ENCODE measurements at regions of chr19 and their contacts with region 1.

Region 1: DNA sequence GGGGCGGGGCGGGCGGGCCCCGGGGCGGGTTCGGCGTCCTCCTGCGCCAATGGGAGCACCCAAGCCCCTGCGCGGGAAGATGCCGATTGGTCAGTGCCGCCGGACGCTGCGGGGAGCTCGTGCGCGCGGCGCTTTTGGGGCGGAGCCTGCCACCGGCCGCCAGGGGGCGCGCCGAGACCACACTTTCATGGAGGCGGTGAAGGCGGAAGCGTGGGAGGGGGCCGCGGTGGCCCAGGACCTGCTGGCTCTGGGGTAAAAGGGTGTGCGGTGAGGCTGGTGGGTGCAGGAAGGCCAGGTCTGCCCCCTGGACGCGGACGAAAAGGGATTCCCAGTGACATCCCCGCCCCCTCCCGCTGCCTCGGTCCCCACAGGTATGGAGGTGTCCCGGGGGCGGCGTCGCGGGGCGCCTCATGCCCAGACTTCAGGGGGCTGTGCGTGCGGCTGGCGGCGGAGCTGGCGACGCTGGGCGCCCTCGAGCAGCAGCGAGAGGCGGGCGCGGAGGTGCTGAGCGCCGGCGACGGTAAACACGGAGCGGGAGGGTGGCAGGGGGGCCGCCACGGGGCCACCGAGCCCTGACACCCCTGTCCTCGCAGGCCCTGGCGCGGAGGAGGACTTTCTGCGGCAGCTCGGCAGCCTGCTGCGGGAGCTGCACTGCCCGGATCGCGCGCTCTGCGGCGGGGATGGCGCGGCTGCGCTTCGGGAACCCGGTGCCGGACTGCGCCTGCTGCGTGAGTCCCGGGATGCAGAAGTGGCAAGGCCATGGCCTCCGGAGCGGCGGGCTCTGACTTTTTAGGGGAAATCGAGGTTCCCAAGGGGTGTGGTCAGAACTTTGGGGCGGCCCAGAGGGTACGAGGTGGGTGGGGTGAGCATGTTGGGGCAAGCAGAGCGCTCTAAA is at the start of gene FAM98C:
- DNase-seq: peak; percentile 96 to 99 (median 98)
- H3K4me3 ChIP-seq: peak within 1 kb of the TSS; percentile 83
- H3K4me3 Mint-ChIP-seq: peak within 1 kb of the TSS; percentile 89 to 98 (median 92)
- H3K27ac ChIP-seq: peak within 1 kb of the TSS; percentile 67
- H3K27ac Mint-ChIP-seq: peak within 1 kb of the TSS; percentile 80 to 96 (median 93)
- H3K4me1 ChIP-seq: peaks cover 10% of the 10 kb centered on the region
- H3K4me1 Mint-ChIP-seq: peaks cover 13 to 27% (median 20%) of the 10 kb centered on the region in 3 donors
- H3K27me3 ChIP-seq: no peaks in the 10 kb centered on the region
- H3K27me3 Mint-ChIP-seq: peaks cover 0 to 8% of the 10 kb centered on the region in 2 donors
- total RNA-seq, gene FAM98C: 17.8 to 25.2 TPM

Region 2: DNA sequence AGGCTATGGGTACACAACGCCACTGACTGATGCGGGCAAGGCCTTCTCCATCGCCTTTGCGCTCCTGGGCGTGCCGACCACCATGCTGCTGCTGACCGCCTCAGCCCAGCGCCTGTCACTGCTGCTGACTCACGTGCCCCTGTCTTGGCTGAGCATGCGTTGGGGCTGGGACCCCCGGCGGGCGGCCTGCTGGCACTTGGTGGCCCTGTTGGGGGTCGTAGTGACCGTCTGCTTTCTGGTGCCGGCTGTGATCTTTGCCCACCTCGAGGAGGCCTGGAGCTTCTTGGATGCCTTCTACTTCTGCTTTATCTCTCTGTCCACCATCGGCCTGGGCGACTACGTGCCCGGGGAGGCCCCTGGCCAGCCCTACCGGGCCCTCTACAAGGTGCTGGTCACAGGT is 76.6 kb before region 1 on chr19:
- CTCF ChIA-PET with region 1: no interaction called
- POLR2A ChIA-PET with region 1: no interaction called
- DNase-seq: no peak
- H3K4me3 ChIP-seq: no peak overlapping the region
- H3K4me3 Mint-ChIP-seq: no peak overlapping the region
- H3K27ac ChIP-seq: no peak overlapping the region
- H3K27ac Mint-ChIP-seq: no peak overlapping the region
- H3K4me1 ChIP-seq: no peaks in the 10 kb centered on the region
- H3K4me1 Mint-ChIP-seq: peaks cover 3 to 11% (median 8%) of the 10 kb centered on the region in 3 donors
- H3K27me3 ChIP-seq: no peaks in the 10 kb centered on the region
- H3K27me3 Mint-ChIP-seq: no peaks in the 10 kb centered on the region

Region 3: GRCh38 chr19:38387550-38388348 is 15.5 kb before region 1 on chr19 and contains the start of gene GGN:
- CTCF ChIA-PET with region 1: interaction called, 16 read pairs
- POLR2A ChIA-PET with region 1: interaction called, 19 read pairs
- DNase-seq: peak; percentile 68 to 83 (median 71)
- H3K4me3 ChIP-seq: peak within 1 kb of the TSS; percentile 78
- H3K4me3 Mint-ChIP-seq: peak within 1 kb of the TSS; percentile 82 to 95 (median 91)
- H3K27ac ChIP-seq: peak within 1 kb of the TSS; percentile 31
- H3K27ac Mint-ChIP-seq: peak within 1 kb of the TSS; percentile 61 to 97 (median 88)
- H3K4me1 ChIP-seq: peaks cover 24% of the 10 kb centered on the region
- H3K4me1 Mint-ChIP-seq: peaks cover 17 to 28% (median 19%) of the 10 kb centered on the region in 3 donors
- H3K27me3 ChIP-seq: no peaks in the 10 kb centered on the region
- H3K27me3 Mint-ChIP-seq: peaks cover 4 to 9% of the 10 kb centered on the region in 2 donors
- total RNA-seq, gene GGN: 0.15 TPM in 1 of 2 experiments, not detected in the other

Region 4: GRCh38 chr19:38514812-38515633 is 111.8 kb after region 1 on chr19:
- CTCF ChIA-PET with region 1: interaction called, 22 read pairs
- POLR2A ChIA-PET with region 1: no interaction called
- DNase-seq: peak; percentile 61 to 83 (median 68)
- H3K4me3 ChIP-seq: no peak overlapping the region
- H3K4me3 Mint-ChIP-seq: peak overlapping the region in 2 of 7 donors; percentile 15 to 29
- H3K27ac ChIP-seq: no peak overlapping the region
- H3K27ac Mint-ChIP-seq: peak overlapping the region in 4 of 8 donors; percentile 0 to 25 (median 16)
- H3K4me1 ChIP-seq: peaks cover 5% of the 10 kb centered on the region
- H3K4me1 Mint-ChIP-seq: peaks cover 8 to 20% (median 18%) of the 10 kb centered on the region in 3 donors
- H3K27me3 ChIP-seq: no peaks in the 10 kb centered on the region
- H3K27me3 Mint-ChIP-seq: peaks cover 0 to 3% of the 10 kb centered on the region in 2 donors

Region 5: DNA sequence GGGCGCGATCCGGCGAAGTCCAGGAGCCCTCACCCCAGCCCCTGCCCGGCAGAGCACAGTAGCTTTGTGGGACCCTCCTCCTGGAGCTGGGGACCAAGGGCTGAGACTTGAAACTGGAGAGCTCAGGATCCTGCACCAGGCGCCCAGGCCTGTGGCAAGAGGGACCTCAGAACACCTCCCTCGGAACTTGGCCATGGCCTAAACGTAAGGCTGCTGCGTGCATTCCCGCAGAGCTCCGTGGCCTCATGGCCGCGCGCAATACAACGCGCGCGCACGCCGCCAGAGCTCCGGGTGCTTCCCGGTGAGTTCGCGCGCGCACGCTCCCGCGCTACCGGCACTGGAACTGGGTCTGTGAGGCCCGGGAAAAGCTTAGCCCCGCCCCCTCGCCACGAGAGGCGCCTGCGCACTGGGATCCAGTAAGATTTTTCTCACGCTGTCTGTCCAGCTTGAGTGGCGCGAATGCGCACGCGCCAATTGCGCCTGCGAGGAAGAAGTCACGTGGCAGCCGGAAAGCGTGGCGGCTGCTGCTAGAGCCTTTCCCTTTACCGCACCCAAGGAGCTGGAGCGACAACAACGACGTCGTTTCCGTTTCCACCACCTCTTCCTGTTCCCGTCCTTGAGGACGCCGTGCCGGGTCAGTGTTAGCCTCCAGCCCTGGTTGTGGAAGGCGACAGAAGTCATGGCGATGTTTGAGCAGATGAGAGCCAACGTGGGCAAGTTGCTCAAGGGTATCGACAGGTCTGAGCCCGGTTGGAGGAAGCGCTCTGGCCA is 215.6 kb after region 1 on chr19 and contains the start of gene EIF3K:
- CTCF ChIA-PET with region 1: interaction called, 15 read pairs
- POLR2A ChIA-PET with region 1: interaction called, 10 read pairs
- DNase-seq: peak; percentile 96 to 98 (median 96)
- H3K4me3 ChIP-seq: peak within 1 kb of the TSS; percentile 75
- H3K4me3 Mint-ChIP-seq: peak within 1 kb of the TSS; percentile 96 to 100 (median 99)
- H3K27ac ChIP-seq: peak within 1 kb of the TSS; percentile 85
- H3K27ac Mint-ChIP-seq: peak within 1 kb of the TSS; percentile 92 to 100 (median 99)
- H3K4me1 ChIP-seq: peaks cover 46% of the 10 kb centered on the region
- H3K4me1 Mint-ChIP-seq: peaks cover 47 to 63% (median 63%) of the 10 kb centered on the region in 3 donors
- H3K27me3 ChIP-seq: no peaks in the 10 kb centered on the region
- H3K27me3 Mint-ChIP-seq: no peaks in the 10 kb centered on the region
- total RNA-seq, gene EIF3K: 275 to 282 TPM

Region 6: DNA sequence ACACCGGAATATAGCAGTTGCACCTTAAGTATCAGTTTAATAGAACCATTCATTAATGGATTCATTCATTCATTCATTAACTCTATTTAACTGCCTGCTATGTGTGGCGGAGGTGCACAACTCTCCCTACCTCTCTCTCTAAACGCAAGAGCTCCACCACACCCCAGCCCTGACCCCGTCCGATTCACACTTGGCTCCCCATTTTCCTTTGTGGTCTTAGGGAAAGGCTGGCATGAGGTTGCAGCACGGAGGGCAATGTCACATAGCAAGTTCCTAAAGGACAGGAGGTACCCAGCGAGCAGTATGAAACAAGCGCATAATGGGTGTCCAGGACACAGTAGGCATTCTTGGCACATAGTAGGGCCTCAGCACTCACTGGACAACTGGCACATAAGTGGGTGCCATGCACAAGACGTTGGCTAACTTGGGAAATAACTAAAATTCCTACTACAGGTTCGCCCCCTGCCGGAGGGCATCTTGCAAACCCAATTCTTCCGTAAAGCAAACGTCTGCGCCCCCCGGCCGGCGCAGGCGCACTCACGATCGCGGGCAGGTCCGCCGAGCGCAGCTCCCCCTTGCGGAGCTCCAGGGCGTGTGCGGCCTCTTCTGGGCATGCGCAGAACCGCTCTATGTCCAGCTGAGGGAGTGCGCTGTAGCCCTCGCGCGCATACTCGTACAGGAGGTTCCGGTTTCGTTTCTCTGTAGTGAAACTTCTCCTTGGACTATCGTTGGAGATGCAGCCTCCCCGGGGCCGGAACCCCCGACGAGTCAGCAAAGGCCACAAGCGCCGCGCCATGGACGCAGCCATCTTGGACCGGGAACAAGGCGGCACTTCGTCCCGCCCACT is 526.9 kb after region 1 on chr19 and contains the start of gene SARS2:
- CTCF ChIA-PET with region 1: interaction called, 51 read pairs
- POLR2A ChIA-PET with region 1: interaction called, 12 read pairs
- DNase-seq: peak; percentile 88 to 97 (median 96)
- H3K4me3 ChIP-seq: peak within 1 kb of the TSS; percentile 96
- H3K4me3 Mint-ChIP-seq: peak within 1 kb of the TSS; percentile 97 to 100 (median 98)
- H3K27ac ChIP-seq: peak within 1 kb of the TSS; percentile 95
- H3K27ac Mint-ChIP-seq: peak within 1 kb of the TSS; percentile 90 to 100 (median 99)
- H3K4me1 ChIP-seq: peaks cover 49% of the 10 kb centered on the region
- H3K4me1 Mint-ChIP-seq: peaks cover 45 to 62% (median 47%) of the 10 kb centered on the region in 3 donors
- H3K27me3 ChIP-seq: no peaks in the 10 kb centered on the region
- H3K27me3 Mint-ChIP-seq: no peaks in the 10 kb centered on the region
- total RNA-seq, gene SARS2: 43.1 to 46.7 TPM

Measured in CD8-positive, alpha-beta memory T cell (primary cell).